ENCODE measurements at regions of chr22 and their contacts with region 1.

Region 1: GRCh38 chr22:19598054-19598855 is 74.0 kb upstream of the CLDN5 start:
- DNase-seq: peak; percentile 45
- ATAC-seq: peak; percentile 15
- H3K4me3 Mint-ChIP-seq: peak overlapping the region; percentile 82
- H3K27ac Mint-ChIP-seq: peak overlapping the region; percentile 96
- H3K4me1 Mint-ChIP-seq: peaks cover 22% of the 10 kb centered on the region
- H3K27me3 Mint-ChIP-seq: no peaks in the 10 kb centered on the region

Region 2: DNA sequence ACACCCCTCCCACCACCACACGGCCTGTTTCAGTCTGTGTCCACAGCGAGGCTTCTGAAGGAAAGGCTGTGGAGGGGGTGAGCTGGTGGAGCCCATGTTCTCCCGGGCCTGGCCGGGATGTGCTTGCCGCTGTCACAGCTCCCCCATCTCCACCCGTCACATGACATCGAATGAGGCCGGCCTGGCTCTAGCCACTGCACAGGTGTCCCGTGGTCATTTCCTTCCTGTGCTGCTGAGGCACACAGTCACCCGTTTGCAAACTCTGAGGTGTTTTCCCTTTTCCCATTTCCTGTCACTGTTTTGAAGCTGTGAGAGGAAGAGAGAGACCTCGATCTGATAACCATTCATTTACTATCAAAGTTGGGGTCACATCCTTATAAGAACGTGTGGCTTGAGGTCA is 18.4 kb before region 1 on chr22:
- POLR2A ChIA-PET with region 1: interaction called, 13 read pairs
- DNase-seq: peak; percentile 49
- ATAC-seq: peak; percentile 49
- H3K4me3 Mint-ChIP-seq: peak overlapping the region; percentile 44
- H3K27ac Mint-ChIP-seq: peak overlapping the region; percentile 89
- H3K4me1 Mint-ChIP-seq: peaks cover 38% of the 10 kb centered on the region
- H3K27me3 Mint-ChIP-seq: no peaks in the 10 kb centered on the region